OCI-LY7 (cell line): ENCODE measurements at regions of chr3 and their contacts with region 1.

Region 1: GRCh38 chr3:5057857-5058324 is 64.2 kb upstream of the ARL8B start:
- DNase-seq: peak; percentile 76
- H3K4me3 ChIP-seq: no peak overlapping the region
- H3K27ac ChIP-seq: no peak overlapping the region
- H3K4me1 ChIP-seq: no peaks in the 10 kb centered on the region
- CTCF ChIP-seq: peak; percentile 82

Region 2: GRCh38 chr3:4712143-4712542 is 345.7 kb before region 1 on chr3:
- CTCF ChIA-PET with region 1: interaction called, 6 read pairs
- POLR2A ChIA-PET with region 1: no interaction called
- intact Hi-C with region 1: loop called (anchors 1 kb)
- DNase-seq: no peak
- H3K4me3 ChIP-seq: no peak overlapping the region
- H3K27ac ChIP-seq: no peak overlapping the region
- H3K4me1 ChIP-seq: no peaks in the 10 kb centered on the region
- CTCF ChIP-seq: no peak

Region 3: GRCh38 chr3:4888913-4889846 is 168.7 kb before region 1 on chr3:
- CTCF ChIA-PET with region 1: no interaction called
- POLR2A ChIA-PET with region 1: no interaction called
- intact Hi-C with region 1: loop called (anchors 10 kb)
- DNase-seq: no peak
- H3K4me3 ChIP-seq: no peak overlapping the region
- H3K27ac ChIP-seq: no peak overlapping the region
- H3K4me1 ChIP-seq: no peaks in the 10 kb centered on the region
- CTCF ChIP-seq: no peak

Region 4: GRCh38 chr3:4978204-4978965 is 79.5 kb before region 1 on chr3:
- CTCF ChIA-PET with region 1: no interaction called
- POLR2A ChIA-PET with region 1: no interaction called
- intact Hi-C with region 1: loop called (anchors 5 kb)
- DNase-seq: peak; percentile 23
- H3K4me3 ChIP-seq: peak overlapping the region; percentile 65
- H3K27ac ChIP-seq: no peak overlapping the region
- H3K4me1 ChIP-seq: peaks cover 26% of the 10 kb centered on the region
- CTCF ChIP-seq: 0 out of 2 replicates have a peak, but pooled peaks have one; percentile 11

Region 5: GRCh38 chr3:5194341-5195159 is 136.7 kb after region 1 on chr3:
- CTCF ChIA-PET with region 1: no interaction called
- POLR2A ChIA-PET with region 1: no interaction called
- intact Hi-C with region 1: no loop called
- DNase-seq: peak; percentile 70
- H3K4me3 ChIP-seq: peak overlapping the region; percentile 46
- H3K27ac ChIP-seq: peak overlapping the region; percentile 99
- H3K4me1 ChIP-seq: peaks cover 83% of the 10 kb centered on the region
- CTCF ChIP-seq: no peak